ENCODE measurements at regions of chr14 and their contacts with region 1.

Region 1: DNA sequence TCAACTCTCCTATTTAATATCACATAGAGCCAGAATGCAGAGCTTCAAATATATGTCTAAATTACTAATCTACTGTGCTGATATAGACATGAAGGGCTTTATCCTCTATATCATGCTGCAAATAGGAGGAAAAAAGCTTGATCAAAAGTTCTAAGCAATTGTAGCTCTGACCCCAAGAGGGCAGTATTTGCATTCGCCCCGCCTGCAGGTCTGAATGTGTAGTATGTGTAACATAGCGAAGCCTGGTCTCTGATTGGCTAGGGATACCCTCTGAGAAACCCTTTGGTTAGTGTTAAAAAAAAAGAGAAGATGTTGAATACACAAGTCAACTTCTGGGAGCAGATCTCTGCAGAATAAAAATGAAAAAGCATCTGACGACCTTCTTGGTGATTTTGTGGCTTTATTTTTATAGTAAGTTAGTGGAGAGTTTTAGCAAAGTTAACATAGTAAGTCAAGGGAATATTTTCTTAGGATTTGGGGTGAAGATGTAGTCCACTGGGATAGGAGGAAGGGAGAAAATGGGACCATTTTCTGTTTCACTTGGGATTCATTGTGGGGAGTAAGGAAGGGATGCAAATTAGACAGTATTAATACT is 151.6 kb upstream of the OR4E1 start:
- DNase-seq: peak in 7 of 9 donors; percentile 40 to 62 (median 51)
- ATAC-seq: peak; percentile 96
- H3K4me3 ChIP-seq: no peak overlapping the region
- H3K4me3 Mint-ChIP-seq: peak overlapping the region; percentile 43 to 79 (median 56)
- H3K27ac ChIP-seq: no peak overlapping the region
- H3K27ac Mint-ChIP-seq: peak overlapping the region in 6 of 9 donors; percentile 2 to 53 (median 36)
- H3K4me1 ChIP-seq: no peaks in the 10 kb centered on the region
- H3K4me1 Mint-ChIP-seq: peaks cover 2 to 10% (median 6%) of the 10 kb centered on the region in 7 donors
- H3K27me3 ChIP-seq: no peaks in the 10 kb centered on the region
- H3K27me3 Mint-ChIP-seq: peaks cover 26 to 36% (median 32%) of the 10 kb centered on the region in 5 donors

Region 2: GRCh38 chr14:21768116-21768874 is 57.0 kb before region 1 on chr14:
- CTCF ChIA-PET with region 1: interaction called, 3 read pairs
- POLR2A ChIA-PET with region 1: no interaction called
- intact Hi-C with region 1: loop called in 1 of 2 experiments (anchors 5 kb)
- DNase-seq: peak in 7 of 9 donors; percentile 21 to 56 (median 41)
- ATAC-seq: peak; percentile 85
- H3K4me3 ChIP-seq: no peak overlapping the region
- H3K4me3 Mint-ChIP-seq: peak overlapping the region; percentile 42 to 81 (median 68)
- H3K27ac ChIP-seq: peak overlapping the region; percentile 6
- H3K27ac Mint-ChIP-seq: peak overlapping the region; percentile 4 to 87 (median 76)
- H3K4me1 ChIP-seq: no peaks in the 10 kb centered on the region
- H3K4me1 Mint-ChIP-seq: peaks cover 0 to 9% (median 0%) of the 10 kb centered on the region in 7 donors
- H3K27me3 ChIP-seq: no peaks in the 10 kb centered on the region
- H3K27me3 Mint-ChIP-seq: peaks cover 0 to 30% (median 5%) of the 10 kb centered on the region in 5 donors

Region 3: GRCh38 chr14:21802441-21802840 is 22.8 kb before region 1 on chr14:
- CTCF ChIA-PET with region 1: no interaction called
- POLR2A ChIA-PET with region 1: no interaction called
- intact Hi-C with region 1: no loop called
- DNase-seq: no peak
- ATAC-seq: no peak
- H3K4me3 ChIP-seq: no peak overlapping the region
- H3K4me3 Mint-ChIP-seq: no peak overlapping the region
- H3K27ac ChIP-seq: no peak overlapping the region
- H3K27ac Mint-ChIP-seq: no peak overlapping the region
- H3K4me1 ChIP-seq: no peaks in the 10 kb centered on the region
- H3K4me1 Mint-ChIP-seq: no peaks in the 10 kb centered on the region
- H3K27me3 ChIP-seq: no peaks in the 10 kb centered on the region
- H3K27me3 Mint-ChIP-seq: peaks cover 0 to 32% (median 19%) of the 10 kb centered on the region in 5 donors

Region 4: DNA sequence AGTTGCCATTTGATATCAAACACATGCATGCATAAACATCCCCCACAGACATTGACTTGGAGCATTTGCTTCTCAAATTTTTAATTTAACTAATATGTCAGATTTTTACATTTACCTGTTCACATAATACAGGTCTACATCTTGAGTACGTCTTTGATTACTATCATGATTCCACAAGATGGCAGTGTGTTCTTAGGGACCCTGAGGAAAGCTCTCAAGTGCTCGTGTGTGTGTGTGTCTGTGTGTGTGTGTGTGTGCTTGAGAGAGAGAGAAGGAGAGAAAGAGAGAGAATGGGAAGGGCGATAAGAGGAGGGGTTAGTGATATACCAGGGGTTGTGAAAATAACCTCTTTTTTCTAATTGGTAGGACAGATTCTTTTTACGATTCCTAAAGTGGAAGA is 15.5 kb after region 1 on chr14:
- CTCF ChIA-PET with region 1: interaction called, 11 read pairs
- POLR2A ChIA-PET with region 1: no interaction called
- intact Hi-C with region 1: no loop called
- DNase-seq: peak in 6 of 9 donors; percentile 21 to 50 (median 33)
- ATAC-seq: peak; percentile 76
- H3K4me3 ChIP-seq: no peak overlapping the region
- H3K4me3 Mint-ChIP-seq: peak overlapping the region; percentile 41 to 83 (median 66)
- H3K27ac ChIP-seq: no peak overlapping the region
- H3K27ac Mint-ChIP-seq: peak overlapping the region in 8 of 9 donors; percentile 50 to 90 (median 78)
- H3K4me1 ChIP-seq: no peaks in the 10 kb centered on the region
- H3K4me1 Mint-ChIP-seq: peaks cover 0 to 10% (median 5%) of the 10 kb centered on the region in 7 donors
- H3K27me3 ChIP-seq: no peaks in the 10 kb centered on the region
- H3K27me3 Mint-ChIP-seq: peaks cover 5 to 41% (median 16%) of the 10 kb centered on the region in 5 donors